Calu3 (cell line): ENCODE measurements at regions of chr10 and their contacts with region 1.

Region 1: GRCh38 chr10:52977581-52977980 is 205.0 kb upstream of the MBL2 start:
- DNase-seq: no peak
- H3K4me3 Mint-ChIP-seq: no peak overlapping the region
- H3K27ac Mint-ChIP-seq: no peak overlapping the region
- H3K4me1 Mint-ChIP-seq: no peaks in the 10 kb centered on the region
- H3K27me3 Mint-ChIP-seq: no peaks in the 10 kb centered on the region
- CTCF ChIP-seq: no peak

Region 2: DNA sequence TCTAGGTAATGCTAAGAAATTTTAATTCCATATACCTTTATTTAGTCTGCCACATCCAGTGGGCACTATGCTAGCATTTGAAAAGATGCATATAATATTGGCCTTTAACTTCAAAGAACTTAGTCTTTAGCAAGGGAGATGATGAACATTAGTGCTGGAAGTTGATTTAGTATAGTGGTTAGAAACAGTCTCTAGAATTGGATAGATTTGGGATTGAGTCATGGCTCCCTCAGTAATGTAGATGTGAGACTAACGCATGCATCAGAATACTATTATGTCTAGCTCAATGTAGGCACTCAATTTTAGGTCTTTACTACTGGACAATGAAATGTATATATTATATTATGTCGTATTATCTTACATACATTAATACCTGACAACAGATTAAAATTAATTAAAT is 657.7 kb before region 1 on chr10:
- CTCF ChIA-PET with region 1: interaction called, 10 read pairs
- intact Hi-C with region 1: no loop called
- DNase-seq: no peak
- H3K4me3 Mint-ChIP-seq: no peak overlapping the region
- H3K27ac Mint-ChIP-seq: peak overlapping the region; percentile 87
- H3K4me1 Mint-ChIP-seq: peaks cover 40% of the 10 kb centered on the region
- H3K27me3 Mint-ChIP-seq: no peaks in the 10 kb centered on the region
- CTCF ChIP-seq: no peak

Region 3: DNA sequence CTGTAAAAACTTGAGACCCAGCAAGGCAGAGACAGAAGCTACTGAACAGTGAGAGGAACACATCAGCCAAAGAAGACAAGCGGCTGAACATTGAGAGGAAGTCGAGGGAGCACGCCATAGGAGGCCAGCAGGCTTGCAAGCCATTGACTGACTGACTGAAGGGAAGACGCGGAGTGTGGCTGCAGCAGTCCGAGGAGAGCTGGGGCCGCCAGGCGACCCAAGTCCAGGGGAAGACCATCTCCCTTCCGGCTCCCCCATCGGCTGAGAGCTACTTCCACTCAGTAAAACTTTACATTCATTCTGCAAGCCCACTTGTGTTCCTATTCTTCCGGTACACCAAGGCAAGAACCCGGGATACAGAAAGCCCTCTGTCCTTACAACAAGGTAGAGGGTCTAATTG is 37.7 kb before region 1 on chr10:
- CTCF ChIA-PET with region 1: no interaction called
- intact Hi-C with region 1: no loop called
- DNase-seq: no peak
- H3K4me3 Mint-ChIP-seq: no peak overlapping the region
- H3K27ac Mint-ChIP-seq: no peak overlapping the region
- H3K4me1 Mint-ChIP-seq: no peaks in the 10 kb centered on the region
- H3K27me3 Mint-ChIP-seq: no peaks in the 10 kb centered on the region
- CTCF ChIP-seq: no peak